ENCODE measurements at regions of chr18 and their contacts with region 1.

Region 1: DNA sequence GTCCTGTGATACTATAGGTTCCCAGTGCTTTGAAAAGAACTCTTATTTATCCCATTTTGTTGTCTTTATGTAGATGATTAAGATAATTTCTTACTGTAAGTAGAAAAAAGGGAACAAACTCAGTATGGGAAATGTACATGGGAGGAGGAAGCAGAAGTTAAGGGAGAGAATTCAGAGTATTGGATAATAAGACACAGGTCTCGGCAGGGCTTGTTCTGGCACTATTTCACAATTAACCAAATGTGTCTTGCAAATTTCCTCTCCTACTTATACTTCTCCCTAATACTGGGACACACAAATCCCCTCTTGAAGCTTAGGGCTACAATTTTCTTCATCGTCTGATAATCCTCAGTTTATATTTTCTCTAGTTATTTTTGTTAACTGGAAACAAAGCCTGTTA is 744.0 kb downstream of the ADCYAP1 start:
- DNase-seq: no peak
- H3K4me3 ChIP-seq: no peak overlapping the region
- H3K4me3 Mint-ChIP-seq: no peak overlapping the region
- H3K27ac Mint-ChIP-seq: no peak overlapping the region
- H3K4me1 ChIP-seq: no peaks in the 10 kb centered on the region
- H3K4me1 Mint-ChIP-seq: no peaks in the 10 kb centered on the region
- H3K27me3 ChIP-seq: no peaks in the 10 kb centered on the region
- H3K27me3 Mint-ChIP-seq: peaks cover 2% of the 10 kb centered on the region
- CTCF ChIP-seq: no peak

Region 2: DNA sequence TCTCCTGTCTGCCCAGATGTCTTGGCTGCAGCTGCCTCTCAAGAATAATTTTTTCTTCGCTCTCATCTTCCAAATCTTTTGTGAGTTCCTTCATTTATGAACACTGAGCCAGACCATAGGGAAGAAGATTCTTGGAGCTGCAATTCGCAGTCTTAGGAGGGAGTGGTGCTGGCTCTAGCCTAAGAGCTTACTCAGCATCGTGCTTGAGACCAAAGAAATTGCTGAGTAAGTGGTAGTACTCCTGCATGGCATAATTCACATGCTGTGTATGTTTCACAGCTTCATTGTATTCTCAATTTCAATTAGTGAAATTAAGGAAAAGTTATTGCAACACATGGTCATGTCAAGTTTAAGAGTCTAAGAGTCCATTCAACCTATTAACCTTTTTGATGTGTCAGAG is 27.7 kb after region 1 on chr18:
- CTCF ChIA-PET with region 1: no interaction called
- POLR2A ChIA-PET with region 1: no interaction called
- intact Hi-C with region 1: loop called (anchors 2 kb)
- DNase-seq: no peak
- H3K4me3 ChIP-seq: no peak overlapping the region
- H3K4me3 Mint-ChIP-seq: no peak overlapping the region
- H3K27ac Mint-ChIP-seq: no peak overlapping the region
- H3K4me1 ChIP-seq: no peaks in the 10 kb centered on the region
- H3K4me1 Mint-ChIP-seq: peaks cover 6% of the 10 kb centered on the region
- H3K27me3 ChIP-seq: no peaks in the 10 kb centered on the region
- H3K27me3 Mint-ChIP-seq: peaks cover 12% of the 10 kb centered on the region
- CTCF ChIP-seq: no peak